WTC11 (cell line): ENCODE measurements at regions of chr12 and their contacts with region 1.

Region 1: DNA sequence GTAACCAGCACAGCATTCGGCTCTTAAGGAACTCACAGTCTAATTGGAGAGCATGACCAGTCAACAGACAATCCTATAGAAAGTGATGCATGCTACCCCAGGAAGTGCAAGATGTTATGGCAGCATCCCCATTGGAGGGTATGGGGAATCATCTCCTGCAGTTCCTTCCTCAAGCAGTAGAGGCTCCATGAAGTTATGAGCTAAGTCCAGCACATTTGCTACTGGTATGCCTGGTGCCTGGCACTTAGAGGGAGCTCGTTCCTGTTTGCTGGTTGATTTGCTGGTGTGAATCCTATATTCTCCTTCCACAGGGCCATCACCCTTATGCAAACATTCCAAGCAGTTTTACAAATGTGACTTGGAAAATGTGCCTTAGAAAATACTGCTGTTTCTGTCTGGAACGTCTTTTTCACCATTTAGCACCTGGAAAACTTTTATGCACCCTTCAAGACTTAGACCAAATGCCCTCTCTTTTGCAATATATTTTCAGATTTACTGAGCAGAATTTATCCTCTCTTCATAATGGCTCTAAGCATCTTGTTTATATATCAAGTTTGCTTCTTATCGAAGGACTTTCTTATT is 136.1 kb upstream of the WSCD2 start:
- DNase-seq: peak; percentile 33
- ATAC-seq: peak; percentile 99
- H3K4me3 Mint-ChIP-seq: no peak overlapping the region
- H3K27ac Mint-ChIP-seq: no peak overlapping the region
- H3K4me1 Mint-ChIP-seq: no peaks in the 10 kb centered on the region
- H3K27me3 Mint-ChIP-seq: peaks cover 11% of the 10 kb centered on the region
- CTCF ChIP-seq: peak; percentile 2; the same call in 1 of the 2 replicates

Region 2: DNA sequence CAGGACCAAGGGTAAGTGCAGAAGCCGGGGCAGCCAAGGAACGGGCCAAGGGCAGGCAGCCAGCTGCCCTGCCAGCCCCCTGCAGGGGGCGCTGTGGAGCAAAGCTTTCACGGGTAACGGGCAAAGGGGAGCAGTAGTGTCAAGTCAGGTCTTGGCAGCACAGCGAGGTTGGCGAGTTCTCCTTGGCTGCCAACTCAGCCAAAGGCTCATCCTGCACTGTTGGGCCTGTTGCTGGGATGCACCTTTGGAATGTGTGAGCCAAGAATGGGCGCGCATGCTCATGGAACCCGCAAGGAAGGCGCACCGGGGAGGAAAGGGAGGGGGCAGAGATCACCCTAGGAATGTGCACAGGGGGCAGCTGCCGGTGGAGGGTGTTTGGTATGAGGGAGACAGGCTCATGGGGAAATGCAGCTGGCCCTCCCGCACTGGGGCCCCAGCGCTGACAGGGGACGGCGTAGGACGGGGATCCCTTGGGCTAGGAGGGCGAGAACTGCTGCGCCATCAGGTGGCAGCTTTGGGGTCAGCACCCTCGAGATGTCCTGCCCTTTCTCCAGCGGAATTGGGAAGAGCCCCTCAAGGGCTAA is 80.4 kb before region 1 on chr12:
- CTCF ChIA-PET with region 1: interaction called, 14 read pairs
- POLR2A ChIA-PET with region 1: no interaction called
- DNase-seq: peak; percentile 85
- ATAC-seq: peak; percentile 94
- H3K4me3 Mint-ChIP-seq: peak overlapping the region; percentile 93
- H3K27ac Mint-ChIP-seq: no peak overlapping the region
- H3K4me1 Mint-ChIP-seq: no peaks in the 10 kb centered on the region
- H3K27me3 Mint-ChIP-seq: peaks cover 52% of the 10 kb centered on the region
- CTCF ChIP-seq: peak; percentile 94

Region 3: GRCh38 chr12:107978201-107978600 is 14.8 kb before region 1 on chr12:
- CTCF ChIA-PET with region 1: interaction called, 21 read pairs
- POLR2A ChIA-PET with region 1: no interaction called
- DNase-seq: no peak
- ATAC-seq: no peak
- H3K4me3 Mint-ChIP-seq: no peak overlapping the region
- H3K27ac Mint-ChIP-seq: no peak overlapping the region
- H3K4me1 Mint-ChIP-seq: no peaks in the 10 kb centered on the region
- H3K27me3 Mint-ChIP-seq: peaks cover 17% of the 10 kb centered on the region
- CTCF ChIP-seq: no peak

Region 4: DNA sequence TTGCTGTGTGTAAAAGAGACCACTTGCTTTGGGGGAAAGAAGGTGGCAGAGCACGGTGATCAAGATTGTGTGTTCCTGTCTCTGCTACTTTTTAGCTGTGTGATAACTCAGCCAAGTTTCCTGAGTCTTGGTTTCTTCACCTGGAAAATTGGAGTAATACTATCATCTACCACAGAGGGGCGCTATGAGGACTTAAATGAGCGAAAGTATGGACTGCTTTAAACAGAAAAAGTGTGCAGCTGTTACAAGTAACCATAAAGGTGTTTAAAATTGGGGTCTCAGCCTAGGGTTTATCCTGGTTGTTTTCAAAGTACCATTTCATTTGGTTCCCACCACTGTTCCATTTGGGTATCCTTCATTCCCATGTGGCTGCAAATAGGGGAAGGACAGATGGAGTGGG is 70.2 kb after region 1 on chr12:
- CTCF ChIA-PET with region 1: interaction called, 12 read pairs
- POLR2A ChIA-PET with region 1: no interaction called
- DNase-seq: no peak
- ATAC-seq: peak; percentile 53
- H3K4me3 Mint-ChIP-seq: no peak overlapping the region
- H3K27ac Mint-ChIP-seq: no peak overlapping the region
- H3K4me1 Mint-ChIP-seq: no peaks in the 10 kb centered on the region
- H3K27me3 Mint-ChIP-seq: no peaks in the 10 kb centered on the region
- CTCF ChIP-seq: peak; percentile 84

Region 5: DNA sequence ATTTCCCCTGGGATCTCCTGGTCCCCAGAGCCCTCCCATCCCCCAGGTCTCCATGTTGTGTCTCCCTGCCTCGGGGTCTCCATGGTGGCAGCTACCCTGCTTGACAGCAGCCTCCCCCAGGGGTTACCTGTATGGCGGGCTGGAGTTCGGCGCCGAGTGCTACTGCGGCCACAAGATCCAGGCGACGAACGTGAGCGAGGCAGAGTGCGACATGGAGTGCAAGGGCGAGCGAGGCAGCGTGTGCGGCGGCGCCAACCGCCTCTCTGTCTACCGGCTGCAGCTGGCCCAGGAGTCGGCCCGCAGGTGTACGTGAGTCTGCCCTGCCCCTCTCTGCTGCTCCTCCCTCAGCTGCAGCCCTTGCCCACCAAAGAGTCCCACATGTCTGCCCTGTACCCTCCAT is 217.0 kb after region 1 on chr12:
- CTCF ChIA-PET with region 1: interaction called, 12 read pairs
- POLR2A ChIA-PET with region 1: no interaction called
- DNase-seq: no peak
- ATAC-seq: no peak
- H3K4me3 Mint-ChIP-seq: no peak overlapping the region
- H3K27ac Mint-ChIP-seq: no peak overlapping the region
- H3K4me1 Mint-ChIP-seq: peaks cover 30% of the 10 kb centered on the region
- H3K27me3 Mint-ChIP-seq: no peaks in the 10 kb centered on the region; the same call in none of the 2 replicates
- CTCF ChIP-seq: no peak

Region 6: DNA sequence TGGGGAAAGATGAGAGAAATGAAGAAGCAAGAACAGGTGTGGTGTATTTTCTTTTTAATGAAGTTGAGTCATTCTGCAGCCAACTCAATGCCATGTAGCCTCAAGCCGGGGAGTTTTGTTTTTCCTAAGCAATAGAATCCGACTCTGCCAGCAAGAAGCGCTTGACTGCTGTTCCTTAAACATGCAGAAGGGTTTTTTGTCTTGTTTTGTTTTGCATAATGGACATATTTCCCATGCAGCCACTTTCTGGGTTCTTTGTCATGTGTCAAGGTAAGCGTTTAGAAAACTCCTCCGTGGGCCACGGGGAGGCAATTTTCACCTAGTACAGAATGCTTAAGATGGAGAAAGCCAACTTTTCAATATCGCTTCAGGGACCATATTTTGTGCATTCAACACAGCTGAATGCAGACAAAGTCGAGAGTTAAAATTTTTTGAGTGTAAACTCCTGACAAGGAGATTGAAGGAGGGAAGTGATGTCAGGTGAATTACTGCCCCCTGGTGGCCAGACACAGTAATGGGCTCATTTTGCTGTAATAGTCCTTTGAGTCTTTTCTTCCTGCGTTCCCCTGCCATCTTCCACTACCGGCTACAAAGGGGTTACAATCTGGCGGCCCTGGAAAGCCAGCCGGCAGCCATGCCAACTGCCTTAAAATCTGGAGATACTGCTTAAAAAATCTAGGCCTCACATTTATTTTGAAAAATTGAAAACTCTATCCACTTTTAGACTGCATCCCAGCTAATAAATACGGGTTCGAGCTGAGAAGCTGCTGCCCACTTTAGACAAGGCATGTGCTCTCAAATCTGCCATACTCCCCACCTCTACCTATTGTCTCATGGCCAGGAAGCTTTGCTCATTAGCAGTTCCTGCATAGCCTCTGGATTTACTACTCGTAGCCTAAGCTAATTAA is 518.9 kb after region 1 on chr12:
- CTCF ChIA-PET with region 1: interaction called, 15 read pairs
- POLR2A ChIA-PET with region 1: no interaction called
- DNase-seq: peak; percentile 85
- ATAC-seq: peak; percentile 3
- H3K4me3 Mint-ChIP-seq: peak overlapping the region; percentile 30
- H3K27ac Mint-ChIP-seq: peak overlapping the region; percentile 68; the same call in 1 of the 2 replicates
- H3K4me1 Mint-ChIP-seq: peaks cover 26% of the 10 kb centered on the region
- H3K27me3 Mint-ChIP-seq: no peaks in the 10 kb centered on the region; the same call in 1 of the 2 replicates
- CTCF ChIP-seq: peak; percentile 95